ENCODE measurements at regions of chr11 and their contacts with region 1.

Region 1: DNA sequence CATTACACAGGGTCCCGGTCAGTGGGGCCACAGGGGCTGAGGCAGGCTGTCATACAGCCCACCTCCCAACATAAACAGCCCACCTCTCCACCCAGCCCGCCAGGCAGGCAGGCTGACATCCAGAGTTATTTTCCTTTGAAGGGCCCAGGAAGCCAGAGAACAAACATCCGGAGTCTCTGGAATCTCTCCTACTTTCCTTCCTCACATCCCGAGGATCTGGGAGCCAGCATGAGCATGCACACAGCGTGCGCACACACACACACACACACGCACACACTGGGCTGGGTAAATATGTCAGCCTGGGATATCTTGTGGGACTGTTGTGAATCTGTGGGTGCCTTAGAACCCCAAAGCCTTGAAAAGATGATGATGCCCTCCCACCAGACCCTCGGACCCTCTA is 55.4 kb downstream of the PDE2A start:
- DNase-seq: no peak
- ATAC-seq: no peak
- H3K4me3 Mint-ChIP-seq: no peak overlapping the region
- H3K27ac Mint-ChIP-seq: no peak overlapping the region
- H3K4me1 Mint-ChIP-seq: peaks cover 15% of the 10 kb centered on the region
- H3K27me3 Mint-ChIP-seq: peaks cover 3% of the 10 kb centered on the region

Region 2: DNA sequence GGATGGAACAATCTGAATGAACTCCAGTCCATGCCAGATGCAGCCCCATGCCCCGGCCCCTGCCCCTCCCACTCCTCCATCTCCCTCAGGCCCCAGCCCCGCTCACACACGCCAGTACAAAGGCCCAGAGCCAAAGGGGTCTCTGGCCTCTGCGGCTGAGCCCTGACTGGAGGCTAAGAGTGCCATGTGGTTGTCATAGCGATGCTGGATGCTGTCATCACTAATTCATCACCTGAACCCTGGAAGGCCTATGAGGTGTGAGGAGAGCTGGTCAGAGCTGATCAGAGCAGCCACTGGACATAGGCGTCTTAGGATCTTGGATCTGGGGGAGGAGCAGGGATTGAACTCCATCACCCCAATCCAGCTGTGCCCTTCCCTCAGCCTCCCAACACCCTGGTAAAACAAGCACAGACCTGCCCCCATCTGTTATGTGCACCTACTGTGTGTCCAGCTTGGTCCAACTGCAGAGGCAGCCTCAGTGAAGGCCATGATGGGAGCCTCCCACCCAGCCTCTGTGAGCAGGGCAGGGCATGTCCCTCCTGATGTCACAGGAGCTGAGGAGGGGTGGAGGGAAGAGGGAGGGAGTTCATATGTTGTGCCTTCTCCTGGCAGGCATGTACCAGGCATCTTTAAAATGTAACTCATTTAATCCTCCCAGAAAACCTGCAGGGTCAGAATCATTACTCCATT is 38.8 kb after region 1 on chr11:
- CTCF ChIA-PET with region 1: no interaction called
- POLR2A ChIA-PET with region 1: no interaction called
- intact Hi-C with region 1: loop called in 1 of 2 experiments (anchors 1 kb)
- DNase-seq: no peak
- ATAC-seq: no peak
- H3K4me3 Mint-ChIP-seq: no peak overlapping the region
- H3K27ac Mint-ChIP-seq: no peak overlapping the region
- H3K4me1 Mint-ChIP-seq: no peaks in the 10 kb centered on the region
- H3K27me3 Mint-ChIP-seq: no peaks in the 10 kb centered on the region

Measured in activated CD4-positive, alpha-beta T cell treated with anti-CD3 and anti-CD28 coated beads for 36 hours (primary cell).